ENCODE measurements at regions of chr14 and their contacts with region 1.

Region 1: DNA sequence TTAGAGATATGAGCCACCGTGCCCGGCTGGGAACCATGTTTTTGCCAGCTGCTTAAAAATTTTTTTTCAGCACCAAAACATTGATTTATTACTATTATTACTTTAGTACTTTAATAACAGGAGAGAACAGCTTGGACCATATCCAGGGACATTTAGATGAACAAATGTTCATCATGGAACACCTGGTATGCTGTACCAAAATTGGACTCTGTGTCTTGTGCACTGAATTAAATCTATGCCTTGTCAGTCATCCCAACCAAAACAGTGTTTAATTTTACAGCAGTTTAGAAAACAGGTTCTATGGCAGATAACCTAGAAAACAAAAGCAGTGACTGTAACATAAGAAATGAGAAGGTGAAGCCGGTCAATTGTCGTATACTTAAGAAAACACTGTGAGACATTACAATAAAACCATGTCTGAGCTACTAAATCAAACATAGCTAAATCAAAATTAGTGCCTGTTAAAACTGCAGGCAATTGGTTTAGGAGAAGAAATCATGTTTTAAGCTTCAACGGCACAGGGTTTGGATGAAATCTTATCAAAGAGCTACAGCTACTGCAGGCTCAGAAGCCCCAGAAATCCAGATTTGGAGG is 58.2 kb upstream of the PYGL start:
- DNase-seq: no peak
- ATAC-seq: no peak
- H3K4me3 ChIP-seq: no peak overlapping the region
- H3K27ac ChIP-seq: no peak overlapping the region
- H3K4me1 ChIP-seq: no peaks in the 10 kb centered on the region
- H3K27me3 ChIP-seq: no peaks in the 10 kb centered on the region

Region 2: DNA sequence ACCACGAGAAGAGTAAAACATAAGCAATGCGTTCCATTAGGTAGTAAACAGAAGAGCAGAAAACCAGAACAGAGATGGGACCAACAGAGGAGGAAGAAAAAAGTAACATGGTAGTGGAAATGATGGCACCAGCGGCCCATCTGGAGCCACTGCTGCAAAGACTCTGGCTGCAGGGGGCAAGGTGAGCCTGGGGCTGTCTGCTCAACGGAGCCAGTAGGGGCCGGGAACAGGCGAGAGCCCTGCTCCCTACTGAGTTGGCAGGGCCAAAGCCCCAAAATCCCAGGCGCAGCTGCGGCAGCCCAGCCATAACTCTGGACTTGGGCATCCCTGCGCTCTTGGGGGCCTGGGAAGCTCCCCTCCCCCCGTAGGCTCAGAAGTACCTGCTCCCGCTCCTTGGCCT is 29.8 kb before region 1 on chr14:
- intact Hi-C with region 1: loop called in 1 of 2 experiments (anchors 2 kb)
- DNase-seq: no peak
- ATAC-seq: no peak
- H3K4me3 ChIP-seq: no peak overlapping the region
- H3K27ac ChIP-seq: no peak overlapping the region
- H3K4me1 ChIP-seq: no peaks in the 10 kb centered on the region
- H3K27me3 ChIP-seq: no peaks in the 10 kb centered on the region

Region 3: DNA sequence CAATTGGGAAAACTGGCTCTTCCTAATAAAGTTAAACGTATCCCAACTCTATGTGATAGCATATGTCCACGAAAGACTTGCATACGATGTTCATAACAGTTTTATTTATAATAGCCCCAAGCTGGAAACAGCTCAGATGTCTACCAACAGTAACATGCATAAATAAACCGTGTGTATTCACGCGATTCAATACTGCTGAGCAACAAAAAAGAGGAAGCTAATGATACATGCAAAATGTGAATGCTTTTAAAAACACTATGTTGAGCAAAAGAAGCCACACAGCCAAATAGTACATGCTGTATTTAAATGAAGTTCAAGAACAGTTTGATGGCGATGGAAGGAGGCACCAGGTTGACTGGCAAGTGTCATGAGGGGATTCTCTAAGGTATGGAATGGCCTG is 36.7 kb after region 1 on chr14:
- intact Hi-C with region 1: no loop called
- DNase-seq: no peak
- ATAC-seq: no peak
- H3K4me3 ChIP-seq: no peak overlapping the region
- H3K27ac ChIP-seq: no peak overlapping the region
- H3K4me1 ChIP-seq: no peaks in the 10 kb centered on the region
- H3K27me3 ChIP-seq: no peaks in the 10 kb centered on the region

Region 4: DNA sequence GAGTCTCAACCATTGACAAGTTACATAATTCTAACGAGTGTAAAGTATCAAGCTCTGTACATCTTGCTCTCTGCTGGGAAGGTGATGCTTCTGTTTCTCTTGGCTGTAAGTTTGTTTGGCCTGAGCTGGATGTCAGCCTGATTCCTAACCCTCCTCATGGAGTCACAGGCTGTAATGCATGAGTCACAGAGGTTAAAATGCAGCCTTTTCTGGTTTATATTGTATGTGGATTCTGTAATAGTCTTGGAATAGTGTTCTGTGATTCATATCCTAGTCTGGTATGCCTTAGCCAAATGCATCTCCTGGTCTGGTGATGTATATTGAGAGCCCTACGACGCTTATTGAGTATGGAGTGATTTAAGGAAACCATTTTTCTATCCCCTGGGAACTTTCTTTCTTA is 544.8 kb after region 1 on chr14:
- intact Hi-C with region 1: no loop called
- DNase-seq: peak in 1 of 2 donors; percentile 62
- ATAC-seq: peak; percentile 88
- H3K4me3 ChIP-seq: no peak overlapping the region
- H3K27ac ChIP-seq: peak overlapping the region in 1 of 2 donors; percentile 43
- H3K4me1 ChIP-seq: peaks cover 0 to 2% of the 10 kb centered on the region in 2 donors
- H3K27me3 ChIP-seq: no peaks in the 10 kb centered on the region